ENCODE measurements at regions of chr14 and their contacts with region 1.

Region 1: DNA sequence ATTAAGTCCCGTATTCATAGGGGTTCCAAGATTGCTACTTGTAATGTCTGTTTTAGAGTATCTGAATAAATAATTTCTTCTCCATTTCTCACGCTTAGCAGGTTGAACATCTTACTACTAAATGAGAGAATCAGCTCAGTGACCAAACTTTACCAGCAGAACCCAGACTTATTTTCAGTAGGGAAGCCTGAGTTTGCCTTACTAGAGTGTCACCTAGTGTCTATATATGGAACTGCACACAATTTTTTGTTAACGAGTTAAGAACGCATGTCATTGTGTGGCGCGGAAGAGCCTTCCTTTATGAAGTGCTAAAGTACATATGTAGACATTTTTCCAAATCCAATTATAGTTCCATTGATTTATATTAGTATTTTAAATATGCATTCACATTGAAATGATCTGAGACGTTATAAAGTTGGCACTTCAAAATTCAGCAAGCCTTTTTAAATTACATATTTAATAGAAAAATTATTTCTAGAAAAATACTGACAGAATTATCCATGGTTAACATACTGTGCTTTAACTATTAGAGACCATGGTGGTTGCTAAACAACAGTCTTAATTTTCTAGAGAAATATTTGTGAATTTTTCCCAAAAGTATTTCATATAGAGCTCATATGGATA is 88.3 kb downstream of the RPS29 start:
- DNase-seq: peak; percentile 21
- H3K4me3 Mint-ChIP-seq: no peak overlapping the region
- H3K27ac Mint-ChIP-seq: no peak overlapping the region
- H3K4me1 Mint-ChIP-seq: no peaks in the 10 kb centered on the region
- H3K27me3 Mint-ChIP-seq: peaks cover 2% of the 10 kb centered on the region

Region 2: DNA sequence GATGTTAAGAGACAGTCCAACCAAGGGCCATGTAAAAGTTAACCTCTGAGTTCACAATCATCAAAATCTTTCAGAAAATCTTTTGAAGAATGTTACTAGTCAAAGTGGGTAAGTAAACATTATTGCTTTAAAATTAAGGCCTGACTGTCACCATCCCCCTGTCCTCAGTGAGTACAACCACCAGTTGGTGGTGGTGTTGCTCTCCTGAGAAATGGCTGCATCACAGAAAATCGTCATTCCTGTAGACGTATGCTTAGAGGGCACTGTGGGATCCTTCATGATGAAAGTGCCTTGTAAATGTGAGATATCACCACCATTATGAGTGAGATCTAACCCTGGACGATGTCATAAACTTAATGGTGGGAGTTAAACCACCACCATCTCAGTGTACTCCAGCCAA is 362.9 kb before region 1 on chr14:
- CTCF ChIA-PET with region 1: no interaction called
- intact Hi-C with region 1: loop called (anchors 2 kb)
- DNase-seq: peak; percentile 13
- H3K4me3 Mint-ChIP-seq: no peak overlapping the region
- H3K27ac Mint-ChIP-seq: no peak overlapping the region
- H3K4me1 Mint-ChIP-seq: no peaks in the 10 kb centered on the region
- H3K27me3 Mint-ChIP-seq: no peaks in the 10 kb centered on the region

Region 3: DNA sequence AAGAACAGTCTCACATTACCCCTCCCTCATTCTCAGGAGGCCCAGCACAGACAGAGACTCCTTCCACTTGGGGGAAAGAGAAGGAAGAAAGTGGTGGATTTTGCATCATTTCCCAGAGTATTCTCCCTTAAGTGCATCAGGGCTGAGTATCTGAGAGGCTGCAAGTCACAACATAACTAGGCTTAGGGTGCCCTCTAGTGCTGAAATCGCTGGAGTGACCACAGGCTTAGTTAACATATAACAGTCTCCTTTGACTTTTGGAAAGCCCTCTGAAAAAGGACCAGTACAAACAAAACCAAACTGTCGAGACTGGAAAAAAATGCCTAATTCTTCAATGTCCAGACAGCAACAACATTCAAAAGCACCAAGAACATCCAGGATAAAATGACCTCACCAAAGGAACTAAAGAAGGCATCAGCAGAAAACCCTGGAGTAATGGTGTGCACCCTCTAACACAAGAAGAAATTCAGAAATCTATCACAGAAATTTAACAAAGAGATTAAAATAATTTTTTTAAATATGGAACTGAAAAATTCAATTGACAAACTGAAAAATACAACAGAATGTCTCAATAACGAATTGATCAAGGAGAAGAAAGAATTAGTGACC is 324.0 kb before region 1 on chr14:
- CTCF ChIA-PET with region 1: no interaction called
- intact Hi-C with region 1: loop called (anchors 5 kb)
- DNase-seq: peak; percentile 67
- H3K4me3 Mint-ChIP-seq: no peak overlapping the region
- H3K27ac Mint-ChIP-seq: no peak overlapping the region
- H3K4me1 Mint-ChIP-seq: no peaks in the 10 kb centered on the region
- H3K27me3 Mint-ChIP-seq: peaks cover 4% of the 10 kb centered on the region

Region 4: GRCh38 chr14:49306152-49306751 is 191.6 kb before region 1 on chr14:
- CTCF ChIA-PET with region 1: interaction called, 3 read pairs
- intact Hi-C with region 1: loop called (anchors 5 kb)
- DNase-seq: no peak
- H3K4me3 Mint-ChIP-seq: no peak overlapping the region
- H3K27ac Mint-ChIP-seq: no peak overlapping the region
- H3K4me1 Mint-ChIP-seq: no peaks in the 10 kb centered on the region
- H3K27me3 Mint-ChIP-seq: peaks cover 5% of the 10 kb centered on the region

Region 5: GRCh38 chr14:49483268-49483667 is 14.6 kb before region 1 on chr14:
- CTCF ChIA-PET with region 1: interaction called, 34 read pairs
- intact Hi-C with region 1: no loop called
- DNase-seq: no peak
- H3K4me3 Mint-ChIP-seq: no peak overlapping the region
- H3K27ac Mint-ChIP-seq: no peak overlapping the region
- H3K4me1 Mint-ChIP-seq: peaks cover 6% of the 10 kb centered on the region
- H3K27me3 Mint-ChIP-seq: peaks cover 3% of the 10 kb centered on the region

Measured in activated naive CD4-positive, alpha-beta T cell treated with anti-CD3 and anti-CD28 coated beads for 36 hours (primary cell).